Transverse colon (tissue), 4 donors: ENCODE measurements at regions of chr17 and their contacts with region 1.

Region 1: GRCh38 chr17:41738077-41738735 is 3.8 kb upstream of the HAP1 start:
- DNase-seq: peak; percentile 87
- H3K4me3 ChIP-seq: no peak overlapping the region
- H3K27ac ChIP-seq: no peak overlapping the region
- H3K4me1 ChIP-seq: peaks cover 10 to 24% (median 17%) of the 10 kb centered on the region in 4 donors
- H3K27me3 ChIP-seq: peaks cover 47% of the 10 kb centered on the region
- CTCF ChIP-seq: peak; percentile 97 to 98 (median 98)
- EP300 ChIP-seq: no peak
- POLR2A ChIP-seq: no peak

Region 2: DNA sequence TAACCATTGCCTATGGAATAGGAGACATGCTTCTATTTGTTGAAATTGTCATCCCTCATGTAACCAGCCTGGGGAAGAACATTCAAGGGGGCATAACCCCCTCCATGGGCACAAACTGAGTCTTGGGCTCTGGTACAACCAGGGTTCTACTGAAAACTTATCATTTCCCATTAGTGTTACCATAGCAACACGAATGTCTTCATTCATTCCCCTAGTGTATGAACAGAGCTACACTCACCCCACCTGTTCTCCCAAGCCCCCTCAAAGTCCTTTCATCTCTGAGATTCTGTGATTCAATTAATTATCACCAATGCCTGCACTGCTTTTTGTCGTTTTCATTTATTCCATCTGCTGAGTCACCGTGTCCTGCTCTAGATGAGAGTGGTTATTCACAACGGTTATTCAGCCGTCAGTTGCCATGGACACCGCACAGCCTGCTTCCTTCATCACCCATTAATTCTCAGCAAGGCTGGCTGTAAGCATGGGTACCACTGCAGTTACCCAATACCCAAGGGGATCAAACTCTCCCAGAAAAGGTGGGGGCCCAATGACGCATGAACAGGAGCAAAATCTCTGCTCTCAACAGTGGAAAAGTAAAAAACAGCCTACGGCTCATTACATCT is 27.6 kb before region 1 on chr17:
- in situ Hi-C with region 1: no loop called
- intact Hi-C with region 1: no loop called
- DNase-seq: no peak
- H3K4me3 ChIP-seq: no peak overlapping the region
- H3K27ac ChIP-seq: no peak overlapping the region
- H3K4me1 ChIP-seq: no peaks in the 10 kb centered on the region
- H3K27me3 ChIP-seq: peaks cover 7% of the 10 kb centered on the region
- CTCF ChIP-seq: no peak
- EP300 ChIP-seq: no peak
- POLR2A ChIP-seq: no peak

Region 3: DNA sequence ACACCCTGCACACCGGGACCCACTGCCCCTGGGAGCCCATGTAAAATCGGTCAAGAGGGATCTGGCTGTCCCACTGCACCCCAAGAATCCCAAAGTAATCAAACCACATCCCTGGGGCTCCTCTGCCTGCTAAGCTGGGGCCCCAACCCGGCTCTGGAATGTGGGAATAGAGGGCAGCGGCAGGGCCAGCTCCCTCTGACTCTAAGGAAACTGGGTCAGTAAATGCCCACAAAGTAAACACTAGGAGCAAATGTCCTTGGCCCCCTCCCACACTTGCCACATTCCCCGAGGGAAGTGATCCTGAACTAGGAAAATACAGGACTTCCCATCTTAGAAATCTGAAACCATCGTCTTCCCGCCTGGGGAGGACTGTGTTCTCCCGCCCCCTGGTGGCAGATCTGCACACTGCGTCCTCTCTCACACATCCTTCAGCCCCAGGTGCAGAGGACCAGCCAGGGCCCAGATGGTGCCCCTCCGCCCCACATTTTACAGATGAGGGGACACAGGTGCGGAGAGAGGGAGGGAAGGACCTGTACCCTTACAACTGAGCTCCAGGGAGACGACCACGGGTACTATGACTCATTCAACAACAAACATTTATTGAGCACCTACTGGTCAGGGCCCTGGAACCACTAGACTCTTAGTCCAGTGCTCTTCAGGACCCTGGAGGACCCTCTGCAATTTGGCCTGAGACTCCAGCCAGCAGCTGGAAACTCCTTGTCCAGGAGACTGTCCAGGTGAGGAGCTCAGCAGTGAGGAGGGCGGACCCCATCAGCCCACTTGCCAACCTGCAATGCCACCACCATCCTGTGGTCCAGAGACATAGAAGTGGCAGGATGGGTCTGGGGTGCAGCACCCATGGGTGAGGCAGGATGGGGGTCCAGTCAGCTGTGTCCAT is 63.4 kb after region 1 on chr17:
- in situ Hi-C with region 1: loop called (anchors 5 to 10 kb)
- intact Hi-C with region 1: loop called (anchors 2 kb)
- DNase-seq: peak; percentile 89
- H3K4me3 ChIP-seq: no peak overlapping the region
- H3K27ac ChIP-seq: peak overlapping the region; percentile 76 to 82 (median 80)
- H3K4me1 ChIP-seq: peaks cover 11 to 19% (median 16%) of the 10 kb centered on the region in 4 donors
- H3K27me3 ChIP-seq: no peaks in the 10 kb centered on the region
- CTCF ChIP-seq: peak; percentile 96 to 99 (median 97)
- EP300 ChIP-seq: no peak
- POLR2A ChIP-seq: no peak

Region 4: DNA sequence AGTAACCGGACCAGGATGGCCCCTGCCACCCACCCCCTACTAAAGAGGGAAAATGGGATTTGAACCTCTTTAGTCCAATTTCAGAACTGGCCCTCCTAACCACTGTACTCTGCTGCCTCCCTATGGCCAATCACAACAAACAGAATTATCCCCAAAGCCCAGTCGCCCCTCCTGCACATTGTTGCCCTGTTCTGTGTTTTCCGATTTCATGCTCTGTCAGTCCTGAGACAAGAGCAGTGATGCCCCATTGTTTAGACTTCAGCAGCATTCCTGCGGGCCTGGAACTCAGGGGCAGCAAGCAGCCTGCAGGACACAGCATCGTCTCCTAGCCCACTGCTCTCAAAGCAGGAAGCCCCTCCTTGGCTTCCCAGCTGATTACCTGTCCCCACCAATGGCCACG is 147.5 kb after region 1 on chr17:
- in situ Hi-C with region 1: loop called in 1 of 4 experiments (anchors 10 kb)
- intact Hi-C with region 1: loop called (anchors 10 kb)
- DNase-seq: no peak
- H3K4me3 ChIP-seq: no peak overlapping the region
- H3K27ac ChIP-seq: no peak overlapping the region
- H3K4me1 ChIP-seq: no peaks in the 10 kb centered on the region
- H3K27me3 ChIP-seq: no peaks in the 10 kb centered on the region
- CTCF ChIP-seq: peak in 1 of 5 experiments; percentile 19
- EP300 ChIP-seq: no peak
- POLR2A ChIP-seq: no peak

Region 5: GRCh38 chr17:42097691-42098631 is 359.8 kb after region 1 on chr17 and contains the start of gene ZNF385C:
- in situ Hi-C with region 1: loop called in 1 of 4 experiments (anchors 25 kb)
- intact Hi-C with region 1: no loop called
- DNase-seq: no peak
- H3K4me3 ChIP-seq: peak within 1 kb of the TSS in 2 of 4 donors; percentile 15 to 16
- H3K27ac ChIP-seq: no peak within 1 kb of the TSS
- H3K4me1 ChIP-seq: peaks cover 0 to 11% (median 9%) of the 10 kb centered on the region in 4 donors
- H3K27me3 ChIP-seq: peaks cover 32% of the 10 kb centered on the region
- CTCF ChIP-seq: no peak
- EP300 ChIP-seq: no peak
- POLR2A ChIP-seq: no peak
- total RNA-seq, gene ZNF385C: 0.27 to 0.48 TPM in 2 of 4 donors, not detected in the others